Activated CD4-positive, alpha-beta T cell treated with anti-CD3 and anti-CD28 coated beads for 36 hours (primary cell): ENCODE measurements at regions of chr18 and their contacts with region 1.

Region 1: DNA sequence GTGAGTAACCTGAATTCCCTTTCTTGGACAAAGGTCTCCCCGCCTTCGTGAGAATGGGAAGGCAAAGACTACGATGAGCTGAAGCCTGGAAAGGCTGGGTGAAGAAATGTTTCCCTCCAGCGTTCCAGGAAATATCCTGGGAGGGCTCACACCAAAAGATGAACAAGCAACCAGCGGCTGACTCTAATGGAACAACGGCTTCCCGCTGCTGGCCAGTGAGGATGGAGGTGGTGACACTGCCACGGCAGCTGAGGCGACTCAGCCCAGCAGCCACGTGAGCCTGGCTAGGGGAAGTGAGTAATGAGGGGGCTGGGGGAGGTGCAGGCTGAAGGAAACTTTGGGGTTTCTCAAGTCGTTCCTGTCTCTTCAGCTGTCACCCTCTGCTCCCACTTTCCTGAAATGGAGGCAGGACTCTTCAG is 105.0 kb upstream of the SMAD7 start:
- DNase-seq: peak; percentile 78
- ATAC-seq: peak; percentile 94
- H3K4me3 Mint-ChIP-seq: no peak overlapping the region
- H3K27ac Mint-ChIP-seq: peak overlapping the region; percentile 26
- H3K4me1 Mint-ChIP-seq: peaks cover 32% of the 10 kb centered on the region
- H3K27me3 Mint-ChIP-seq: no peaks in the 10 kb centered on the region

Region 2: GRCh38 chr18:49169037-49169521 is 113.3 kb after region 1 on chr18:
- CTCF ChIA-PET with region 1: no interaction called
- POLR2A ChIA-PET with region 1: no interaction called
- intact Hi-C with region 1: loop called in 1 of 2 experiments (anchors 5 kb)
- DNase-seq: peak; percentile 58
- ATAC-seq: peak; percentile 86
- H3K4me3 Mint-ChIP-seq: peak overlapping the region; percentile 4
- H3K27ac Mint-ChIP-seq: no peak overlapping the region
- H3K4me1 Mint-ChIP-seq: peaks cover 29% of the 10 kb centered on the region
- H3K27me3 Mint-ChIP-seq: no peaks in the 10 kb centered on the region